Breast epithelium (tissue), 4 donors: ENCODE measurements at regions of chr2 and their contacts with region 1.

Region 1: DNA sequence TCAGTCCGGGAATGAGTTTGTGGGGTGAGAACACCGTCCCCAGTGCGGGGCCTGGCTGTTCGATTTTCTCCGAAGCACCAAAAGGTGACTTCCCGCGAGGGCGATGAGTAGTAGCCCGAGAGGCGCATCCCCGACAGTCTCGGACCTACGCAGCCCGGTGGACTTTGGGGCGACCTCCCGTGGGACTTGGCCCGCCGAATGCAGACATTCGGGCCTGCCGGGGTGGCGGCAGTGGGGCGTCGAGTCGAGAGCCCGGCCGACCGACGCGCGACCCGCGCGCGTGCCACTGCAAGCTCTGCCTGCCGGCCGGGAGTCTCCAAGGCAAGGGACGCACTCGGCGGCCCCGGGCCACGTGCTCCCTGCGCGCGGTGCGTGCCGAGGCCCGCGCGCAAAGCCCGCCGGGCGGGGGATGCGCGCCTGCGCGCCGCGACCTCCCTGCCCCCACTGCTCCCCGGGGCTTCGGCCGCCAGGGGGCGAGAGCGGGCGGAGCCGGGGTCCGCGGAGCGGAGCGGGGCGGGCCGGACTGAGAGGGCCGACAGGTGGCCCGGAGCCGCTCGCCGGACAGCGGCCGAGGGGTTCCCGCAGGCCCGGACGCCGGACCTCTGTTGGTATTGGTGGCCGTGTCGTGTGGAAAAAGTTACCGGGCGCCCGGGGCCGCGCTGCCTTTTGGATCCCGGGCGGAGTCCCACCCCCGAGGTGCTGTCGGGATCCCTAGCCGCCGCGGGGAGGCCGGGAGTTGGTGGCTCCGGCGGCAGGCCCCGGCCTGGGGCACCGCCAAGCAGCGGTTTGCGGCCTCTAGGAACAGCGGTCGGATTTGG is 1.9 kb downstream of the PTMA start:
- DNase-seq: peak; percentile 79 to 83
- H3K4me3 ChIP-seq: peak overlapping the region; percentile 96 to 100 (median 100)
- H3K27ac ChIP-seq: peak overlapping the region; percentile 100
- H3K4me1 ChIP-seq: peaks cover 6 to 13% of the 10 kb centered on the region in 2 donors
- H3K27me3 ChIP-seq: no peaks in the 10 kb centered on the region
- CTCF ChIP-seq: peak; percentile 18 to 99 (median 27)
- POLR2A ChIP-seq: no peak

Region 2: GRCh38 chr2:231612179-231613053 is 97.8 kb before region 1 on chr2:
- intact Hi-C with region 1: loop called (anchors 5 kb)
- DNase-seq: peak; percentile 94 to 96
- H3K4me3 ChIP-seq: peak overlapping the region in 2 of 3 donors; percentile 55 to 67
- H3K27ac ChIP-seq: peak overlapping the region; percentile 99
- H3K4me1 ChIP-seq: peaks cover 11 to 20% of the 10 kb centered on the region in 2 donors
- H3K27me3 ChIP-seq: no peaks in the 10 kb centered on the region
- CTCF ChIP-seq: peak; percentile 99
- POLR2A ChIP-seq: no peak

Region 3: DNA sequence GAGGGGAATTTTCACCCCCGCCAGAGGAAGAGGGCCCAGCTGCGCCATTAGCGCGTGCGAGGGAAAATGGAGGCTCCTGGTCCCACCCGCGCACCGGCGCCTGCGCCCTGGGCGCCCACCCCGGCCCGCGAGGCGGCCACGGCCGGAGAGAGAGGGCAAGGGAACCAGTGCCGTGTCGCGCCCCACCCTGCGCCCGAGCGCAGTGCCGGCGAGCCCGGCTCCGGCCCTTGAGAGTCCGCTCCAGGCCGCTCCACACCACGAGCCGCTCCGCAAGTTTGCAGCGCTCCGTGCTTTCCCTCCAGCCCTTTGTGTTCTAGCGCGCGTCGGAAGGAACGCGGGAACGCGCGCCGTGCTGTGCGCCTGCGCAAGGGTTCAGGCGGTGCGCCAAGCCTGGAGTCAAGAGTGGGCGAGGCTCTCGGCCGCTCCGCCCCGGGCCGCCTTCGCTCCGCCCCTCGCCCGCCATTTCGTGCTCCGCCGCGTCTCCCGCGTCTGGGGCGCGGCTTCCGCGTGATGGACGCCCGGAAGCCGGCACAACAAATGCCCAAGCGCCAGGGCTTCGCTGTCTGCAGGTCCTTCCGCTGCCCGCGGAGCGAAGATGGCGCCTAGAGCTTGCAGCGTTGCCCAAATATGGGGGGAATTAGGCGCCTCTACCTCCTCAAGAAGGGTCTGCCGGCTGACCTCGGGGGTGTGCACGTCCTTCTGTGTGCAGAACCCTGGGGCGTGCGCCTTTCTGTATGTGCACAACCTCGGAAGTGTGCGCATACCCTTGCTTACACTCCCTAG is 48.0 kb before region 1 on chr2:
- intact Hi-C with region 1: loop called (anchors 10 kb)
- DNase-seq: peak; percentile 91 to 97
- H3K4me3 ChIP-seq: peak overlapping the region; percentile 34 to 72 (median 61)
- H3K27ac ChIP-seq: peak overlapping the region; percentile 94 to 95
- H3K4me1 ChIP-seq: no peaks in the 10 kb centered on the region
- H3K27me3 ChIP-seq: no peaks in the 10 kb centered on the region
- CTCF ChIP-seq: peak in 1 of 3 donors; percentile 9
- POLR2A ChIP-seq: no peak

Region 4: GRCh38 chr2:231680992-231681853 is 29.0 kb before region 1 on chr2:
- intact Hi-C with region 1: loop called (anchors 2 kb)
- DNase-seq: peak in 1 of 2 donors; percentile 67
- H3K4me3 ChIP-seq: peak overlapping the region; percentile 47 to 66 (median 58)
- H3K27ac ChIP-seq: peak overlapping the region; percentile 86 to 90
- H3K4me1 ChIP-seq: no peaks in the 10 kb centered on the region
- H3K27me3 ChIP-seq: no peaks in the 10 kb centered on the region
- CTCF ChIP-seq: no peak
- POLR2A ChIP-seq: no peak

Region 5: GRCh38 chr2:231696007-231696371 is 14.2 kb before region 1 on chr2:
- intact Hi-C with region 1: no loop called
- DNase-seq: no peak
- H3K4me3 ChIP-seq: no peak overlapping the region
- H3K27ac ChIP-seq: peak overlapping the region; percentile 42 to 84
- H3K4me1 ChIP-seq: no peaks in the 10 kb centered on the region
- H3K27me3 ChIP-seq: no peaks in the 10 kb centered on the region
- CTCF ChIP-seq: no peak
- POLR2A ChIP-seq: no peak

Region 6: DNA sequence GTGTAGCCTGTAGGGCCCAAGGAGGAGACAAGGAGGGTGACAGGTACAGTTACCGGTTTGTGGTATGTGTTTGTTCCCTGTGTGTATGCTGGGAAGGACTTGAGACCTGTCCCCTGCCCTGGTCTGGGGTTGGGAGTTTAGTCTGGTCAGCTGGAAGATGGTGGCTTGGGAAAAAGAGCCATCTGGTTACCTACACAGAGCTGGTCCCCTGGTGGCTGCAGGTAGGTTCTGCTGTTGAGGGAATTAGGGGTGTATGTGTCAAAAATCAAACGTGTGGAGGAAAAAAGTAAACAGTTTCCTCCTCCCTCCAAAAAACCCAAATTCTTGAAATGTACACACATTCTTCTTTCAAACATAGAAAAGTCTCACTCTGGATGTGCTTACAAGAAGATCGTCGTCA is 22.4 kb after region 1 on chr2:
- intact Hi-C with region 1: no loop called
- DNase-seq: no peak
- H3K4me3 ChIP-seq: no peak overlapping the region
- H3K27ac ChIP-seq: no peak overlapping the region
- H3K4me1 ChIP-seq: no peaks in the 10 kb centered on the region
- H3K27me3 ChIP-seq: no peaks in the 10 kb centered on the region
- CTCF ChIP-seq: no peak
- POLR2A ChIP-seq: no peak